Common myeloid progenitor, CD34-positive (primary cell): ENCODE measurements at regions of chr19 and their contacts with region 1.

Region 1: DNA sequence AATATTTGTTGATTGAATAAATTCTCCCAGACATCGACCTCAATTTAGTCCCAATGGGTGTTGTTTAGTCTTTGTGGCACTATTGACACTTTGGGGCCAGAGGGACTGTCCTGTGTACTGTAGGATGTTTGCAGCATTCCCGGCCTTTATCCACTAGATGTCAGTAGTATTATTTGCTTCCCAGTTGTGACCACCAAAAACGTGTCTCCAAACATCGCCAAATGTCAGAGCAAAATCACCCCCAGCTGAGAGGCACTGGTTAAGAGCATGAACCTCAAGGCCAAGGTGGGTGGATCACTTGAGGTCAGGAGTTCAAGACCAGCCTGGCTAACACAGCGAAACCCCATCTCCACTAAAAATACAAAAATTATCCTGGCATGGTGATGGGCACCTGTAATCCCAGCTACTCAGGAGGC is 15.4 kb downstream of the NLRP12 start:
- DNase-seq: peak; percentile 37 to 65 (median 64)
- H3K4me3 ChIP-seq: no peak overlapping the region
- H3K27ac ChIP-seq: no peak overlapping the region
- H3K4me1 ChIP-seq: no peaks in the 10 kb centered on the region
- H3K27me3 ChIP-seq: no peaks in the 10 kb centered on the region

Region 2: DNA sequence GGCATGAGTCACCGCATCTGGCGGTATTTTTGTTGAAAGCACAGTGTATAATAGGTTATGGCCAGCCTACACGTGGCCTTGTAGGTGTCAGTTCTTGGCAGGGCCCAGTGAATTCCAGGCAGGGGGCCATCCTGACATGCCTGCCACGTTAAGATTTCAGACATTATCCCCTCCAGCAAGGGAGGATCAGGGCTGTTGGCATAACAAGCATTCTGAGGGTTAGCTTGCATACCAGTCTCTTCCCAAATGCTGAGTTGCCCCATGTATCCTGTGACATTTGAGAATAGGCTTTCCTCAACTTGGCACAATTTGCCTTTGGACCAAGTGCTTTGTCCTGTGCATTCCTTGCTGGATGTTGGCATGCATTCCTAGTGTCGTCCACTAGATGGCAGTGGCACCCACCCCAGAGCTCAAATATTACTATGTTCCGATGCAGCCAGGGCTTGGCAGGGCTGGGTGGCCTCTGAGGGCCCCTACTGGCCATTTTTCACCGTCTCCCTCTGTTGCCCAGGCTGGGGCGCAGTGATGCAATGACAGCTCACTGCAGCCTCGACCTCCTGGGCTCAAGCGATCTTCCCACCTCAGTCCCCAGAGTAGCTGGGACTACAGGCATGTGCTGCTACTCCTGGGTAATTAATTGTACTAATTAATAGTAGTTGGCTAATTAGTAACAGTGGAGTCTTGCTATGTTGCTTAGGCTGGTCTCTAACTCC is 15.8 kb before region 1 on chr19:
- CTCF ChIA-PET with region 1: interaction called, 23 read pairs
- POLR2A ChIA-PET with region 1: no interaction called
- DNase-seq: peak; percentile 84 to 93 (median 89)
- H3K4me3 ChIP-seq: no peak overlapping the region
- H3K27ac ChIP-seq: no peak overlapping the region
- H3K4me1 ChIP-seq: peaks cover 0 to 2% (median 0%) of the 10 kb centered on the region in 4 experiments
- H3K27me3 ChIP-seq: no peaks in the 10 kb centered on the region

Region 3: GRCh38 chr19:53823380-53824120 is 14.8 kb after region 1 on chr19:
- CTCF ChIA-PET with region 1: interaction called, 19 read pairs
- POLR2A ChIA-PET with region 1: no interaction called
- DNase-seq: peak in 1 of 3 donors; percentile 37
- H3K4me3 ChIP-seq: peak overlapping the region in 5 of 7 experiments; percentile 20 to 73 (median 62)
- H3K27ac ChIP-seq: peak overlapping the region in 1 of 2 experiments; percentile 18
- H3K4me1 ChIP-seq: peaks cover 0 to 28% (median 18%) of the 10 kb centered on the region in 4 experiments
- H3K27me3 ChIP-seq: no peaks in the 10 kb centered on the region

Region 4: DNA sequence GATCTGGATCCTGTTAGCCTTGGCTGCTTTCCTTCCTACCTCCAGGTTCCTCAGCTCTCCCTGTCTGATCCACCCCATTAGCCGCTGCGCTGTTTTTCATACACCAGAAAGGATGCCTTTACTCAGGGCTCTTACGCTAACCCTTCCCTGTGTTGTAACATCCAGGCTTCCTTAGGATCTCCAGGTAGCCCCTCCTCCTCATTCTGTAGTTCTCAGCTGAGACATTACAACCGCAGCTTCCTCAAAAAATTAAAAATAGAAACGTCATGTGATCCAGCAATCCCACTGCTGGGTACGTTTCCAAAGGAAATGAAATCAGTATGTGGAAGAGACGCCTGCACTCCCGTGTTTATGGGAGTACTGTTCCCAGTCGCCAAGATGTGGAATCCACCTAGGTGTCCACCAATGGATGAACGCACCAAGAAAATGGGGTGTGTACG is 40.5 kb after region 1 on chr19:
- CTCF ChIA-PET with region 1: no interaction called
- POLR2A ChIA-PET with region 1: no interaction called
- DNase-seq: peak in 2 of 3 donors; percentile 61 to 66
- H3K4me3 ChIP-seq: peak overlapping the region in 2 of 7 experiments; percentile 26 to 36
- H3K27ac ChIP-seq: no peak overlapping the region
- H3K4me1 ChIP-seq: peaks cover 10 to 21% (median 13%) of the 10 kb centered on the region in 4 experiments
- H3K27me3 ChIP-seq: peaks cover 0 to 23% (median 3%) of the 10 kb centered on the region in 5 experiments

Region 5: DNA sequence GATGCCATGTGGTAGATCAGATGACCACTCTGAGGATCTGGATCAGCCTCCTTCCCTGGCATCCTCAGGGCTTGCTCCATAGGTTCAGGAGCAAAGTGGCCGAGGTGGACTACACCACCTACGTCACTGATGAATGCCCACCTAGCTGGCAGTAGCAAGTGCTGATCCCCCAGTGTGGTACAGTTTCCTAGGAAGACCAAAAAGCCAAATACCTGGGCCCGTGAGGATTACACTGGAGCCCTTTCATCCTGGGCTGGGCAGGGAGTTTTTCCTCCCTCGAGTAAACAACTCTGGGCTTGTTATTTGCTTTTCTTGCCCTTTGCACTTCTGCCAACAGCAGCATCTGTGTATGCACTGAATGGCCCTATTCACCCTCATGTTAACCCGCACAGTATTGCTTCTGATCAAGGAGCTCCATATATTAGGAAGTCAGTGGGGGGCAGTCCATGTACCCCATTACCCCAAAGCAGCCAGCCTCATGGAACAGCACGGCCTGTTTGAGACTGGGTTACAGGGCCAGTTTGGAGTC is 55.7 kb after region 1 on chr19:
- CTCF ChIA-PET with region 1: no interaction called
- POLR2A ChIA-PET with region 1: no interaction called
- DNase-seq: no peak
- H3K4me3 ChIP-seq: no peak overlapping the region
- H3K27ac ChIP-seq: no peak overlapping the region
- H3K4me1 ChIP-seq: peaks cover 5 to 32% (median 22%) of the 10 kb centered on the region in 4 experiments
- H3K27me3 ChIP-seq: no peaks in the 10 kb centered on the region

Region 6: DNA sequence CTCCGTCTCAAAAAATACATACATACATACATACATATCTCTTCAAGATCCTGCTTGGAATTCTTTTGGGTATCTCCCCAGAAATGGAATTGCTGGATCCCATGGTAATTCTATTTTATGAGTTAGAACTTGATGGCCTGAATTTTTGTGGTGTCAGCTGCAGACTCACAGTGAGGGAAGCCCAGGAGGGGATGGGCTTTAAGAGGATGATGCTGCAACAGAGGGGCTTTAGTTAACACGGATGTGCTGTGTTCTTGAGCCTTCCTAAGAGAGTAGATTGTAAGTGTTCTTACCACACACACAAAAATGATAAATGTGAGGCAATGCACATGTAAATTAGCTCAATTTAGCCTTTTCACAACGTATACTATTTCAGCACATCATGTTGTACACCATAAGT is 214.5 kb after region 1 on chr19:
- CTCF ChIA-PET with region 1: interaction called, 19 read pairs
- POLR2A ChIA-PET with region 1: no interaction called
- DNase-seq: no peak
- H3K4me3 ChIP-seq: no peak overlapping the region
- H3K27ac ChIP-seq: no peak overlapping the region
- H3K4me1 ChIP-seq: peaks cover 6 to 32% (median 22%) of the 10 kb centered on the region in 4 experiments
- H3K27me3 ChIP-seq: no peaks in the 10 kb centered on the region

Region 7: GRCh38 chr19:54030895-54031586 is 222.3 kb after region 1 on chr19:
- CTCF ChIA-PET with region 1: interaction called, 12 read pairs
- POLR2A ChIA-PET with region 1: no interaction called
- DNase-seq: peak; percentile 39 to 62 (median 62)
- H3K4me3 ChIP-seq: no peak overlapping the region
- H3K27ac ChIP-seq: no peak overlapping the region
- H3K4me1 ChIP-seq: peaks cover 0 to 3% (median 0%) of the 10 kb centered on the region in 4 experiments
- H3K27me3 ChIP-seq: peaks cover 0 to 6% (median 0%) of the 10 kb centered on the region in 5 experiments